ENCODE measurements at regions of chr3 and their contacts with region 1.

Region 1: DNA sequence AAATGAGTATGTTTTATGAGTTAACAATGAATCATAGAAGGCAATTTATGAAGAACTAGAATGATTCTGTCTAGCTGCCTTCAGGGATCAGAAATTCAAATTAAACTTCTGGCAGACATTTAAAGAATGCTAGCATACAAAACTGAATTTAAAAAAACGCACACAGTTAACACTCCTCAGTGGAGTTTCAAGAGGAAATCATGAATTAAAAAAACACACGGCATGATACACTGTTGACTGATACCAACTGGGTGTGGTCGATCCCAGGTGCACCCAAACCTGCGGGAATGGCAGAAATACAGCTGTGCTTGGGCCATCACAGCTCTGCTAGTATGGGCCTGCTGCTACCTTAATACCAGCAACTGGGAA is 526.0 kb downstream of the FOXP1 start:
- DNase-seq: no peak
- H3K4me3 ChIP-seq: no peak overlapping the region
- CTCF ChIP-seq: no peak

Region 2: GRCh38 chr3:70999730-71000129 is 57.8 kb before region 1 on chr3:
- in situ Hi-C with region 1: loop called (anchors 5 kb)
- DNase-seq: peak; percentile 49
- H3K4me3 ChIP-seq: no peak overlapping the region
- CTCF ChIP-seq: no peak

Region 3: DNA sequence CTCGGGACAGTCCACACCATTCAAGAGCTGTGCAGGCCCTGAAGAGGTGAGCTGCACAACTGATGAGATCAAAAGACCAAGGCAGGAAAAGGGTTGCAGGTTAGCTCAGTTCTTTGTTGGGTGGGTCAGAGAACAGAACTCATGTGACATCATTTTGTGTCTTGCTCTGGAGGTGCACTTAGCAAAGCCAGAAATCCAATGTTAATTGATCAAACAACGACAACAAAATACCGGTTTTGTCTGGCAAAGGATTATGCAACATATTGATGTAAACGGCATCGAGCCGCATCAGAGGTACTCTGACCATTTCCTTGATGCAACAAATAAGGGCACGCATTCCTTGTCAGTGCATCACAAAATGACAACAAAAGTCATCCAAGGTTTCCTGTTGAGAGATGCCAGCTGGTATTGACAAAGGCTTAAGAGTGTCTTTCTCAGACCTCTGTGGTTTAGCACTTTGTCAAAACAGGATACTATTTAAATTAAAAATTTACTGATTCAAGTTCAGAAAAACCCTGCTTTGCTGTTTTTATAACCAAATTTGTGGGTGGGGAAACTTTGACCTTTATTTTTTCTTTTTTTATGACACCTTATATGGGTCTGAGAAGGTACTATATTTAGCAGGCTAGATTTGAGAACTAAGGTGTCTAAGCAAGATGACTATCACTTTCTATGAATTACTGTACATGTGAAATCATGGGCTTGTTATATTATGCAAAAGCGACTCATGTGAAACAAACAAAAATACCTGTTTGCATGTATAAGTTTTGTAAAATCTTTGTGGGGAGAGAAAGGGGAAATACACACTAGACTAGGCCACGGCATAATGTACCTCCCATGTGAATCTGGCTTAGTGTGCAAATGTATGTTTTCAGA is 29.9 kb after region 1 on chr3:
- in situ Hi-C with region 1: no loop called
- DNase-seq: no peak
- H3K4me3 ChIP-seq: no peak overlapping the region
- CTCF ChIP-seq: no peak

Region 4: DNA sequence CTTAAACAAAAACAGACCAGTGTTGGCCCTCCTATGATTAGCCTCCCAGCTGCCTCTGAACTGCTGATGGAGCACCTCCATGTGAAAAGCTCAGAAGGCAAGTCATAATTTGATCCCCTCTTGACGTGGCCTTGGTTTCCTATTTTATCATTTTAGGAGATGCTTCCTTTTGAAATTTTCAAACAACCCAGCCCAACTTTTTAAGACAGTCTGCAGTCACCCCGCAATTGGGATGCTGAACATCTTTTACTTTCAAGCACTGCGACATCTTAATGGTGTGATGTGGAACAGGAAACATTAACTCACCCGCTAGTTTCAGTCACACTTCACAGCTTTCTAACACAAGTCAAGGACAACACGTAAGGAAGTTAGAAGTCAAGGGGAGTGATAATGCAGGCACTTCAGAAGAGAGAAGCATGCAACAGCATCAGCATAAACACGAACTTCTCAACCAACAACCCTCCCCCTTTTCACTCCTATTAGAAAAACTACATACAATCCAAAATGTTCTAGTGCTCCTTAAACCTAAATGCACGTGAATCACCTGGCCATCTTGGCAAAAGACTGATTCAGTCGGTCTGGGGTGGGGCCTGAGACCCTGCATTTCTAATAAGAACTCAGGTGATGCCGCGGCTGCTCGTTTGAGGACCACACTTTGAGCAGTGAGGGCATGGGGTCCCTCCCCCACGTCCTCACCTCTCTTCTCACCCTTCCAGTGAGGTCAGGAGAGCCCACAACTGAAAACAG is 364.5 kb after region 1 on chr3:
- in situ Hi-C with region 1: no loop called
- DNase-seq: no peak
- H3K4me3 ChIP-seq: no peak overlapping the region
- CTCF ChIP-seq: no peak